IMR-90 (cell line): ENCODE measurements at regions of chr3 and their contacts with region 1.

Region 1: GRCh38 chr3:27939940-27940339 is 217.8 kb upstream of the EOMES start:
- DNase-seq: peak; percentile 21
- ATAC-seq: peak; percentile 82
- H3K4me3 ChIP-seq: no peak overlapping the region
- H3K27ac ChIP-seq: no peak overlapping the region
- H3K4me1 ChIP-seq: no peaks in the 10 kb centered on the region
- H3K27me3 ChIP-seq: no peaks in the 10 kb centered on the region
- CTCF ChIP-seq: no peak
- POLR2A ChIP-seq: no peak
- RAD21 ChIP-seq: no peak

Region 2: DNA sequence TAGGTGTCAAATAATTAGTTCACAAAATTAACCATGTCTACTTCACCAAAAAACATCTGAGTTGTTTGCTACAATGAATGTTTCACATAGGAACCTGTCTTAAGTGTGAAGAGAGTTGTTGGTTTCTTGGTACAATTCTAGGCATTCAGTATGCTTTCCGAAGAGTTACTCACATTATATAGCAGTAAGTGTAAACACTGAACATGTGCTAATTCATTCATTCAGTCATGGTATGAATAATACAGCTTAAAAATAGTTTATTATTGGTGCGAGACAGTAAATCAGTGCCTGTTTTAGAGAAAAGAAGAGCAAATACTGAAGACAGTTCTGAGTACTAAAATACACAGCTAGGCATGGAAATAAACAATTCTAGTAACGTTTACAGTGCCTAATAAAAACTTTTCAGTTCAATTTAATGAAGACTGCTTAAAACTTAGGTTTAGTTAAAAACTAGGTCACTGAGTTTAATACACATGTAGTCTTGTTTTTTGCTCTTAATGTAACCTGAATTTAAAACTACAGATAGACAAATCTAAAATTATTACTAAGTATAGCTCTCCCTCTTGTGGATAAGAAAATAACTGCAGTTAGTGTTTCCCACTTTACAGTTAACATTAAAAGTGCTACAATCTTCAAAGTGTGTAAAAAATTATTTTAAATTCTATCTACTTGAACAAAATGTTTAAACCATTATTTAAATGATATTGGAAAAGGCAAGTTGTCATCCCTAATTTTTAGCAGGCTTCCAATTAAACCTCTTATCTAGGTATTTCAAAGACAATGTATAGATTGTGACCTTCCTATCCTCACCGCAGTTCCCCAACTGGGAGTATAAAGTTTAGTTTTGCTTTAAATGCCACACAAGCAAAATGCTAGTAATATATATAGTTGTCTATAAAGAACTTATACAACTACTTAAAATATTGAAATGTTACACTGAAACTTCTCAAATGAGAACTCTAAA is 388.5 kb after region 1 on chr3:
- CTCF ChIA-PET with region 1: no interaction called
- POLR2A ChIA-PET with region 1: no interaction called
- dilution Hi-C with region 1: no loop called
- in situ Hi-C with region 1: no loop called
- intact Hi-C with region 1: loop called (anchors 5 kb)
- DNase-seq: peak; percentile 33
- ATAC-seq: peak; percentile 82
- H3K4me3 ChIP-seq: no peak overlapping the region
- H3K27ac ChIP-seq: no peak overlapping the region
- H3K4me1 ChIP-seq: no peaks in the 10 kb centered on the region
- H3K27me3 ChIP-seq: no peaks in the 10 kb centered on the region
- CTCF ChIP-seq: peak; percentile 66
- POLR2A ChIP-seq: no peak
- RAD21 ChIP-seq: peak; percentile 60